ENCODE measurements at regions of chr15 and their contacts with region 1.

Region 1: GRCh38 chr15:63234451-63234870 is 42.9 kb upstream of the APH1B start:
- DNase-seq: no peak
- ATAC-seq: no peak
- H3K4me3 Mint-ChIP-seq: no peak overlapping the region
- H3K27ac Mint-ChIP-seq: peak overlapping the region; percentile 67
- H3K4me1 Mint-ChIP-seq: peaks cover 79% of the 10 kb centered on the region
- H3K27me3 Mint-ChIP-seq: no peaks in the 10 kb centered on the region

Region 2: DNA sequence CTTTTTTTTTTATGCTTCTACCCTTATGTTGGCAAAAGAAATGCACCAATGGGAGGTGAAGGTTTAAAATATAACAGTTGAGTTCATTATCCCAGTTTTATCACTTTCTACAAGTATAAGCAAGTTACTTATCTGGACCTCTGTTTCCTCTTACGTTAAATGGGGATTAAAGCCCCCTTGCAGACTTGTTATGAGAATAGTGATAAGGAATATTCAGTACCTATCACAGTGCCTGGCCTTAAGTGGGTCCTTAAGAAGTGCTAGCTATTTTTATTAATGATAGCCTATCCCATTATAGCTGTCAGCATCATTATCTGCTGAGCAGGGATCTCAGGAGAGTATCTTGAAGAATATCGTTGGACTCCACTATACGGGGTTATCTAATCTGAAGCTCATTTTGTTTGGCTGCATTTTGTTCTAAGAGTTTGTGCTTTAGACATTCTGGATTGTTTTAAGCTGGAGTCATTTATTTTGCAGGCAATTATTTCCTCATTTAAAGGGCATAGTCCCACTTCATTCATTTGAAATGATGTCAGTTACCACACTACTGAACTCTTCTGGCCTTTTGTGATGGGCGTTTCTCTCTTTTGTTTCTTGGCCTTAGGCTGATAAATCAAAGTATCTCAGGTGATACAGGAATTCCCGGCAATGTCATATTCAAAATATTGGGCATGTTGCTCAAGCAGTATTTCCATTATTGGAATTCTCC is 16.2 kb before region 1 on chr15:
- CTCF ChIA-PET with region 1: interaction called, 13 read pairs
- POLR2A ChIA-PET with region 1: interaction called, 8 read pairs
- intact Hi-C with region 1: loop called (anchors 2 kb)
- DNase-seq: no peak
- ATAC-seq: no peak
- H3K4me3 Mint-ChIP-seq: no peak overlapping the region
- H3K27ac Mint-ChIP-seq: peak overlapping the region; percentile 39
- H3K4me1 Mint-ChIP-seq: peaks cover 83% of the 10 kb centered on the region
- H3K27me3 Mint-ChIP-seq: no peaks in the 10 kb centered on the region

Region 3: GRCh38 chr15:63246691-63247464 is 12.4 kb after region 1 on chr15:
- CTCF ChIA-PET with region 1: interaction called, 20 read pairs
- POLR2A ChIA-PET with region 1: no interaction called
- intact Hi-C with region 1: no loop called
- DNase-seq: no peak
- ATAC-seq: no peak
- H3K4me3 Mint-ChIP-seq: no peak overlapping the region
- H3K27ac Mint-ChIP-seq: no peak overlapping the region
- H3K4me1 Mint-ChIP-seq: peaks cover 50% of the 10 kb centered on the region
- H3K27me3 Mint-ChIP-seq: no peaks in the 10 kb centered on the region